ENCODE measurements at regions of chr11 and their contacts with region 1.

Region 1: GRCh38 chr11:14764579-14765527 is 121.2 kb downstream of the PDE3B start:
- DNase-seq: no peak
- ATAC-seq: peak; percentile 87
- H3K4me3 Mint-ChIP-seq: peak overlapping the region; percentile 38
- H3K27ac Mint-ChIP-seq: peak overlapping the region; percentile 74
- H3K4me1 Mint-ChIP-seq: peaks cover 34% of the 10 kb centered on the region
- H3K27me3 Mint-ChIP-seq: no peaks in the 10 kb centered on the region
- CTCF ChIP-seq: no peak

Region 2: GRCh38 chr11:14237444-14237961 is 527.4 kb before region 1 on chr11:
- CTCF ChIA-PET with region 1: no interaction called
- POLR2A ChIA-PET with region 1: no interaction called
- intact Hi-C with region 1: loop called (anchors 5 kb)
- DNase-seq: peak; percentile 42
- ATAC-seq: peak; percentile 97
- H3K4me3 Mint-ChIP-seq: peak overlapping the region; percentile 42
- H3K27ac Mint-ChIP-seq: peak overlapping the region; percentile 89
- H3K4me1 Mint-ChIP-seq: peaks cover 39% of the 10 kb centered on the region
- H3K27me3 Mint-ChIP-seq: peaks cover 1% of the 10 kb centered on the region
- CTCF ChIP-seq: no peak

Region 3: GRCh38 chr11:14537134-14537599 is 227.7 kb before region 1 on chr11:
- CTCF ChIA-PET with region 1: interaction called, 3 read pairs
- POLR2A ChIA-PET with region 1: interaction called, 3 read pairs
- intact Hi-C with region 1: loop called (anchors 1 kb)
- DNase-seq: no peak
- ATAC-seq: peak; percentile 88
- H3K4me3 Mint-ChIP-seq: peak overlapping the region; percentile 80
- H3K27ac Mint-ChIP-seq: peak overlapping the region; percentile 81
- H3K4me1 Mint-ChIP-seq: peaks cover 9% of the 10 kb centered on the region
- H3K27me3 Mint-ChIP-seq: no peaks in the 10 kb centered on the region
- CTCF ChIP-seq: peak; percentile 86

Region 4: DNA sequence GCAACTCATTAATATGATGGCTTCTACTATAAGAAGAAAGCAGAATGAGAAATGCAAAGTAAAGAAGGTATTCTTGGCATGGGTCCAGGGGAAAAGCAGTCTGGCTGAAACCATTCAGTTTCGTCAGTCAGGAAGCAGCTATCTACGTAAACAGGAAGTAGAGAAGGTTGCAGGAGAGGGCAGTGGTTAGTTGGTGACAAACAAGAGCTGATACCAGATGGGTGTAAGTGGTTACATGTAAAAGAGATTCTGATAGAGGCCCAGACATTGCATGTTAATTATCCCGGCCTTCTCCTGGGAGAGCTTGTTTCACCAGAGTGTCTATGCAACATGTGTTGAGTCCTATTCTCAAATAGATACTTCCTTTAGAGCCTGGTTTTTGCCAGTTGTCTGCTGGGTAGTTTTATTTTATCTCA is 186.3 kb before region 1 on chr11:
- CTCF ChIA-PET with region 1: interaction called, 4 read pairs
- POLR2A ChIA-PET with region 1: interaction called, 35 read pairs
- intact Hi-C with region 1: loop called (anchors 1 kb)
- DNase-seq: no peak
- ATAC-seq: peak; percentile 94
- H3K4me3 Mint-ChIP-seq: peak overlapping the region; percentile 50
- H3K27ac Mint-ChIP-seq: peak overlapping the region; percentile 77
- H3K4me1 Mint-ChIP-seq: peaks cover 33% of the 10 kb centered on the region
- H3K27me3 Mint-ChIP-seq: peaks cover 1% of the 10 kb centered on the region
- CTCF ChIP-seq: no peak

Region 5: DNA sequence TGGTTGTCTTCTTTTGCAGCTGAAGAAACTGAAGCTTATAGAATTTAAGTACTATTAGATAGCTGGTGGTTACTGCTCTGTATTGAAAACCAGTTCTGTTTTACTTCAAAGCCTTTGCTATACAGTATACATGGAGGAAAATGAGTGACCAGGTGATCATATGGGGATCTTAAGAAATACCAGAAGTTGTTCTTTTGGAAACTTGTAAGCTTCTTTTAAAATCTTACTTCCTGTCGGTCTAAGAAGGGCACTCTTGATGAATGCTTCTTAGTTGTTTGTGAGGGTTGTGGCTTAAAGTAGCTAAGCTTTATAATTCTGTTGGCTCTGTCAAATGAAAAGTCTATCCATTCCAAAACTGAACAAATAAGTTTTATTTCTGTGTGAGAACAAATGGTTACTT is 66.1 kb before region 1 on chr11:
- CTCF ChIA-PET with region 1: no interaction called
- POLR2A ChIA-PET with region 1: no interaction called
- intact Hi-C with region 1: no loop called
- DNase-seq: no peak
- ATAC-seq: no peak
- H3K4me3 Mint-ChIP-seq: no peak overlapping the region
- H3K27ac Mint-ChIP-seq: no peak overlapping the region
- H3K4me1 Mint-ChIP-seq: peaks cover 5% of the 10 kb centered on the region
- H3K27me3 Mint-ChIP-seq: peaks cover 4% of the 10 kb centered on the region
- CTCF ChIP-seq: no peak

Region 6: GRCh38 chr11:14974515-14975251 is 209.8 kb after region 1 on chr11:
- CTCF ChIA-PET with region 1: no interaction called
- POLR2A ChIA-PET with region 1: interaction called, 3 read pairs
- intact Hi-C with region 1: loop called (anchors 2 kb)
- DNase-seq: no peak
- ATAC-seq: peak; percentile 51
- H3K4me3 Mint-ChIP-seq: peak overlapping the region; percentile 62
- H3K27ac Mint-ChIP-seq: no peak overlapping the region
- H3K4me1 Mint-ChIP-seq: peaks cover 30% of the 10 kb centered on the region
- H3K27me3 Mint-ChIP-seq: peaks cover 62% of the 10 kb centered on the region
- CTCF ChIP-seq: no peak

Region 7: GRCh38 chr11:15169815-15170551 is 405.1 kb after region 1 on chr11:
- CTCF ChIA-PET with region 1: no interaction called
- POLR2A ChIA-PET with region 1: no interaction called
- intact Hi-C with region 1: no loop called
- DNase-seq: no peak
- ATAC-seq: no peak
- H3K4me3 Mint-ChIP-seq: no peak overlapping the region
- H3K27ac Mint-ChIP-seq: no peak overlapping the region
- H3K4me1 Mint-ChIP-seq: no peaks in the 10 kb centered on the region
- H3K27me3 Mint-ChIP-seq: peaks cover 29% of the 10 kb centered on the region
- CTCF ChIP-seq: no peak

Measured in activated B cell treated with CpG ODN at 0.5 μM for 24 hours (primary cell).